ENCODE measurements at regions of chr16 and their contacts with region 1.

Region 1: DNA sequence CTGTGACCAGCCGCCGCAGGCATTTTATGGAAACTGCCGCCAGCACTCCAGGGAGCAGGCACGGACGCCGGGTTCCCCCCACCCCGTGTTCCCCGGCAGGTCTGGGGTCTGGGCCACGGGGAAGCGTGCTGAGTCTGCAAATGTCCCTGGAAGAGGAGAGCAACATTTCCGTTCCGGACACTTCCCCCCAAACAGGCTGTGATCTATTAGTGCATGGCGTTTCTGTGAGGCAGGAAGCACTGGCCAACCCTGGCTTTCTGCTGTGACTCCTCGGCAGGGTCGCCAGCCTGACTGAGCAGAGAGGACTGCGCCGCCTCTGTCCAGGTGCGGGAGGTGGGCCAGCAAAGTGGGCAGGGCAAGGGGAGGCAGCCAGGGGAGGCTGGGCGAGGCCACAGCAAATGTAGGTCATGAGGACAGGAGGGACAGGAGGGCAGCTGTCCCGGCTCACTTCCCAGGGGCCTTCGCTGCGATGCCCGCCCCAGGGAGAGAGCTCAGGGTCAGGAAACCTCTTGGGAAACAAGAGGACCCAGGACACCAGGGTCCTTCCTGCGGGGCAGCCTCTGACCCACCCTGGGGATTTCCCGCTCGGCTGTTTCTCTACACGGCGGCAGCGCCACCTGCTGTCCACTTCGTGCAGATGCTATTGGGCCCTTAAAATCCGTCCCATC is 9.5 kb downstream of the FOXF1 start:
- DNase-seq: peak; percentile 61
- H3K4me3 ChIP-seq: peak overlapping the region in 2 of 4 donors; percentile 3
- H3K27ac ChIP-seq: peak overlapping the region; percentile 94 to 99 (median 96)
- H3K4me1 ChIP-seq: peaks cover 6 to 22% (median 9%) of the 10 kb centered on the region in 4 donors
- H3K27me3 ChIP-seq: peaks cover 36% of the 10 kb centered on the region
- CTCF ChIP-seq: peak; percentile 85 to 93 (median 91)
- EP300 ChIP-seq: no peak
- POLR2A ChIP-seq: no peak

Region 2: DNA sequence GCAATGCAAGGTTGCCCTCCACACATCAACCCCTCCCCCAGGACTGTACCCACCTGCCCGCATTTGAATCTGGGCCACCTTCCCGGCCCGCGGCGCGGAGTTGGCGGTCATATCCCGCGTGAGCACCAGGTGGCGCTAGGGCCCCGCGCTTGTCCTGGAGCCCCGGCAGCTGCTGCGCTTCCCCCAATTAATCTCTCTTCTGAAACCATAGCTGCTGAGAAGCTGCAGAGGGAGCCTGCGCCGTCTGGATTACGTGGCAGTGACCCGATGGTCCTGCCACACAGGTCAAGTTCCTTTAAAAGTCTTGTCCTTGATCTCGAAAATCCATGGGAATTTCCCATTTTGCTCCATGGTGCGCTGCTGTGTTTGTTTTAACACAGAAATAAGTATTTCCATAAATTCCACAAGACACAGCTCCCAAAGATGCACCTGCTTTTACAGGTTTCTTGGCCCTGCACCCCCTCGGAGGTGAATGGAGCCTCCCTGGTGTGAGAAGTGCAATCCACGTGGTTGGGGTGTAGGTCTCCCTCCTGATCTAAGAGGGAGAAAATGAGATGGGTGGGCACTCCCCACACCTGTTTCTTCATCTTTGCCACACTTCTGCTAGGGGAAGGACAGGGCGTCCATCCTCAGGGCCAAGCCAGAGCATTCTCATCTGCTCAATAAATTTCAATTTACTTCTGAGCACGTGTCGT is 698.2 kb before region 1 on chr16:
- in situ Hi-C with region 1: loop called in 2 of 4 experiments (anchors 10 to 25 kb)
- intact Hi-C with region 1: no loop called
- DNase-seq: peak; percentile 81
- H3K4me3 ChIP-seq: no peak overlapping the region
- H3K27ac ChIP-seq: peak overlapping the region in 2 of 4 donors; percentile 29 to 31
- H3K4me1 ChIP-seq: peaks cover 0 to 12% (median 4%) of the 10 kb centered on the region in 4 donors
- H3K27me3 ChIP-seq: peaks cover 6% of the 10 kb centered on the region
- CTCF ChIP-seq: peak; percentile 95 to 99 (median 98)
- EP300 ChIP-seq: no peak
- POLR2A ChIP-seq: no peak

Region 3: GRCh38 chr16:86078121-86078600 is 441.6 kb before region 1 on chr16:
- in situ Hi-C with region 1: loop called (anchors 10 kb)
- intact Hi-C with region 1: loop called (anchors 2 kb)
- DNase-seq: peak; percentile 39
- H3K4me3 ChIP-seq: no peak overlapping the region
- H3K27ac ChIP-seq: peak overlapping the region; percentile 64 to 87 (median 74)
- H3K4me1 ChIP-seq: peaks cover 0 to 11% (median 2%) of the 10 kb centered on the region in 4 donors
- H3K27me3 ChIP-seq: no peaks in the 10 kb centered on the region
- CTCF ChIP-seq: no peak
- EP300 ChIP-seq: peak; percentile 89
- POLR2A ChIP-seq: no peak

Region 4: GRCh38 chr16:86195863-86196630 is 323.7 kb before region 1 on chr16:
- in situ Hi-C with region 1: loop called in 3 of 4 experiments (anchors 25 kb)
- intact Hi-C with region 1: loop called (anchors 2 kb)
- DNase-seq: no peak
- H3K4me3 ChIP-seq: peak overlapping the region in 1 of 4 donors; percentile 17
- H3K27ac ChIP-seq: peak overlapping the region; percentile 81 to 91 (median 86)
- H3K4me1 ChIP-seq: peaks cover 0 to 5% (median 3%) of the 10 kb centered on the region in 4 donors
- H3K27me3 ChIP-seq: peaks cover 58% of the 10 kb centered on the region
- CTCF ChIP-seq: no peak
- EP300 ChIP-seq: no peak
- POLR2A ChIP-seq: no peak

Region 5: DNA sequence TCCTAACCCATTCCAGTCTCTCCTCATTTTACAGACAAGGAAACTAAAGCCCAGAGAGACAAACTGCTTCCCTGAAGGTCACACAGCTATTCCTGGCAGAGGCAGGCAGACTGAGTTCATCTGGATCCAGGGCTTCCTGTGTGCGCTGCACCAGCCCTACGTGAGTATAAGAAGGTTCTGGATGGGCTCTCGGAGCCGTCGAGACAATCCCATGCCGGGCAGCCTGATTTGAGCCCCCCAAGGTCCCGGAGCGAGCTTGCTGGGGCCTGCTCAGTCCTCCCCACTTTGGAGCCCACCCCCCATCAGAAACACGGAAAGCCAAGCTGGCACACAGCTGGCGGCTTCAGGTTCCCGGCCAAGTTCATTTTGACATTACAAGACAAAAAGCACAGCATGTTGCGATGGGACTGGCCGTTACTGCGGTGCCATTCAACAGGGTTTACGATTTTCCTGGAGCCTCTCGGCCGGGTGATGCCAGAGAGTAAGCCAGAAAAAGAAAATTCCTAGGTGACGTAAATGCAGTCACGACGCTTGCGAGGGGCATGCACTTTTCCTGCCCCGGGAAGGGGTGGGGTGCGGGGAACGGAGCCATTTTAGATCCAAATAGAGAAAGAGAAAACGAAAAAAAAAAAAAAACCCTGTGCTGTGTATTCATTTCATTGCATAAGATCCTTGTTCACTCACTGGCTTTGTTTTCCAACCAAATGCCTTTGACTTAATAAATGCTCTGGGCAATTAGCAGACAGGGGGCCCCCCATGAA is 176.6 kb before region 1 on chr16:
- in situ Hi-C with region 1: loop called in 3 of 4 experiments (anchors 5 to 25 kb)
- intact Hi-C with region 1: loop called (anchors 5 kb)
- DNase-seq: peak; percentile 68
- H3K4me3 ChIP-seq: no peak overlapping the region
- H3K27ac ChIP-seq: peak overlapping the region; percentile 83 to 93 (median 90)
- H3K4me1 ChIP-seq: peaks cover 7 to 21% (median 16%) of the 10 kb centered on the region in 4 donors
- H3K27me3 ChIP-seq: peaks cover 10% of the 10 kb centered on the region
- CTCF ChIP-seq: no peak
- EP300 ChIP-seq: peak; percentile 98
- POLR2A ChIP-seq: no peak

Measured in transverse colon (tissue), 4 donors.